AG04449 (cell line): ENCODE measurements at regions of chr9 and their contacts with region 1.

Region 1: GRCh38 chr9:115694014-115694413 is 459.6 kb upstream of the PAPPA start:
- DNase-seq: peak; percentile 91
- H3K4me3 ChIP-seq: no peak overlapping the region
- CTCF ChIP-seq: peak; percentile 33

Region 2: DNA sequence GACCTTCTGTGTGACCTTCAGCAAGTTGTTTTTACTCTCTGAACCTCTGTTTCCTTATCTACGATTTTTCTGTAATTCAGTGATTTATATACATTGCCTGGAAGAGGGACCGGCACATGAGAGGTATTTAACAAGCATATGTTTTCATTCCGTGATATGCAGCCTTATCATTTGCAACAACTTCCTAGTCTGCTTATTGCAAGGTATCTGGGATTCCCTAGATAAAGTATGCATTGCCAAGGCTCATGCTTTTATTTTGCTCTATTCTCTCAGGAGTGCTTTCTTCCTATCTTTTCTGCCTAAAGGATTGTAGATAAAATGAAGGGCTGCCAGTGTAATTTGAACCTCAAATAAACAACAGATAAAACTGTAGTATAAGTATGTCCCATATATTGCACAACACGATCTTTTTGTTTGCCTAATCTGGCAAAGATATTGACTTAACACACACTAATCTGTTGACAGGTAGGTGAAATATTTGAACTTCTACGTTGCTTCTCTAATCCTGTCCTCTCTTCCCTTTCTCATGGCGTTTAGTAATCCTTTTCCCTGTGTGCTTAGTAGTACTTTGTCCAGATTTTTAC is 198.9 kb before region 1 on chr9:
- CTCF ChIA-PET with region 1: no interaction called
- POLR2A ChIA-PET with region 1: no interaction called
- DNase-seq: no peak
- H3K4me3 ChIP-seq: no peak overlapping the region
- CTCF ChIP-seq: no peak

Region 3: DNA sequence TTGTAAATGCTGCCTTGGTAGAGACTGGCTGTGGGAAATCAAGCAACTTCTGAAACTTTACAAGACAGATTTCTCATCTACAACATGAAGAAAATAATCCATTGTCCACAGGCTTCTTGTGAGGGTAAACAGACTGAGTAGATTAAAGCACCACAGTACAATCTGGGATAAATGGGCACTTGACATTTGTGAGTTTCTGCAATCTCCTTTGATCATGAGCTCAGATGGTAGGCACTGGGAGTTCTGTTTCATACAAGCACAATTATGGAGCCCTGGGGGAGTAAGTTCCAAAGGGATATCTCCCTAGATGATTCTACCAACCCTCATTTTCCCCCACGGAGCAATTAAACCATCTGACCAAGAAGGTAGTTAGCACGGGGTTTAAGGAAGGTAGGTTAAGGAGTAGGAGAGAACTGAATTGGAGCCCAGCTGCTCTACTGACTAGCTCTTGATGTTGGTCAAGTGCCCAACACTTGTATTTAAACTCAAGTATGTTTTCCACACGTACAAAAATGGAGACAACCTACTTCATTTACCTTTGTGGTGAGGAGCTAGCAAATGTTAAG is 96.6 kb before region 1 on chr9:
- CTCF ChIA-PET with region 1: interaction called, 86 read pairs
- POLR2A ChIA-PET with region 1: interaction called, 11 read pairs
- DNase-seq: no peak
- H3K4me3 ChIP-seq: peak overlapping the region; percentile 59
- CTCF ChIP-seq: no peak

Region 4: DNA sequence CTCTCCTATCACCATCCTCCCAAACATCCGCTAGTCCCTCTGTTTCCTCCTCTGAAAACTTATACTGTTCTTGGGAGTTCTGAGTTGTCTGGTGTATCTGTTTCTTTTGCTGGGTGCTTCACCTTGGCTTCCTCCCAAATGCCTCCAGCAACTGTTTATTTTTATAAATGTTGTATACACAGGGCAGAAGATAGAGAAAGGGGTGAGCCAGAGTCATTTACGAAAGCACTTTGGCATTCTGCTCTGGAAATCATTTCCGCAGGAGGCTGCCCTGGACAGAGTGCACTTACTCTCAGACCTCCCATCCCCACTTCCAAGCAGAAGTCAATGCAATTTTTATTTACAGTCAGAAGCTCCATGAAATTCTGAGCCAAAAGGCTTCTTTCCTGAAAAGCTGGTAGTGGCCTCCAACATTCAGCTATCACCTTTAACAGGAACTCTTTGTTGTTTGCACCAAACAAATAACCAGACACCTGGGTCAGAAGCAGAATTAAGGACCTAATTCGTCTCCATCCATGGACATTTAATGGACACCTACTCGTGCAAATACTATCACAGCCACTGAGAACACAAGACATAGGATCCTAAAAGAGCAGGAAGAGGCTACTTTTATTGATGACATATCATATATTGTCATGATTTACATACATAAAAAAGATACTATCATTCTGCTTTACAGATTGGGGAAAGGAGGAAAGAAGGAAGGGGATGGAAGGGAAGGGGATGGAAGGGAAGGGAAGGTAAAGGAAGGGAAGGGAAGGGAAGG is 230.1 kb after region 1 on chr9:
- CTCF ChIA-PET with region 1: no interaction called
- POLR2A ChIA-PET with region 1: no interaction called
- DNase-seq: no peak
- H3K4me3 ChIP-seq: no peak overlapping the region
- CTCF ChIP-seq: no peak